Heart left ventricle (tissue), 16 donors: ENCODE measurements at regions of chr19 and their contacts with region 1.

Region 1: DNA sequence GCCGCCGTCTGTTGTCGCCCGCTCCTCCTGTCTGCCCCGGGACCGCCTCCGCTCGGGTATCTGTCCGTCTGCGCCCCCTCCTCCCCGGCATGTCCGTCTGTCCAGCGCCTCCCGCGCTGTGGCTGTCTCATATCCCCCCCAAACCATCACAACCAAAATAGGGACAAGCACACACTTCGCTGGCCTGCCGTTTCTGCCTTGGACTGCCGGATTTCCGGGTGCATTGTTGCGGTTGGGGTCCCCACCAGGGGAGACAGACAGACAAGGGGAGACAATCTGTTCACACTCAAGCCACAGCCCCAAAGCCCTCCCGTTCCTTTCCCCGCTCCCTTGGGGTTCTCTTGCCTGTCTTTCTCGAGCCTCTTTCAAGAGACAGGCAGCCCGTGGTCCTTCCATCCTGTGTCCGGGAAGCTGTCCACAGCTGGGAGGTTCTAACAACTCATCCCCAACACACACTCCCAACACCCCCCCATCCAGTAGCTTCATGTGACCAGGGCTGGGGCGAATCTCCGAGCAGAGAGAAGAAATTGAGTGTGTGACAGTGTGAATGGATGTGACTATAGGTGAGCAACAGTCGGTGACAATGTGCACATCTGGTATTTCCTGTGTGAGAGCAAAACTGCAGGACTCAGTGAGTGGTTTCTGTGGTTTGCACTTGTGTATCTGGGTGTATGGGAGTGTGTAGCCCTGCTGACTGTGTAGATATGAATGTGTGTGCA is 16.5 kb upstream of the FOSB start:
- DNase-seq: peak in 2 of 5 donors; percentile 31 to 38
- ATAC-seq: peak in 1 of 4 donors; percentile 10
- H3K4me3 ChIP-seq: peak overlapping the region; percentile 35 to 80 (median 63)
- H3K27ac ChIP-seq: peak overlapping the region; percentile 27 to 90 (median 74)
- H3K4me1 ChIP-seq: peaks cover 3 to 52% (median 27%) of the 10 kb centered on the region in 12 donors
- H3K27me3 ChIP-seq: no peaks in the 10 kb centered on the region
- CTCF ChIP-seq: no peak
- POLR2A ChIP-seq: no peak

Region 2: GRCh38 chr19:45171211-45171623 is 280.1 kb before region 1 on chr19:
- intact Hi-C with region 1: no loop called
- DNase-seq: no peak
- ATAC-seq: peak; percentile 28 to 77 (median 55)
- H3K4me3 ChIP-seq: no peak overlapping the region
- H3K27ac ChIP-seq: peak overlapping the region; percentile 16 to 83 (median 54)
- H3K4me1 ChIP-seq: peaks cover 0 to 42% (median 18%) of the 10 kb centered on the region in 12 donors
- H3K27me3 ChIP-seq: no peaks in the 10 kb centered on the region
- CTCF ChIP-seq: no peak
- POLR2A ChIP-seq: no peak

Region 3: GRCh38 chr19:45423589-45424190 is 27.6 kb before region 1 on chr19 and contains the start of gene ERCC1:
- intact Hi-C with region 1: no loop called
- DNase-seq: peak; percentile 94 to 97 (median 95)
- ATAC-seq: peak; percentile 76 to 89 (median 86)
- H3K4me3 ChIP-seq: peak within 1 kb of the TSS; percentile 38 to 83 (median 70)
- H3K27ac ChIP-seq: peak within 1 kb of the TSS; percentile 66 to 98 (median 92)
- H3K4me1 ChIP-seq: peaks cover 2 to 73% (median 32%) of the 10 kb centered on the region in 12 donors
- H3K27me3 ChIP-seq: peaks cover 0 to 4% (median 0%) of the 10 kb centered on the region in 9 donors
- CTCF ChIP-seq: no peak
- POLR2A ChIP-seq: peak in 1 of 2 donors; percentile 29
- total RNA-seq, gene ERCC1: 104 to 156 (median 121) TPM

Region 4: DNA sequence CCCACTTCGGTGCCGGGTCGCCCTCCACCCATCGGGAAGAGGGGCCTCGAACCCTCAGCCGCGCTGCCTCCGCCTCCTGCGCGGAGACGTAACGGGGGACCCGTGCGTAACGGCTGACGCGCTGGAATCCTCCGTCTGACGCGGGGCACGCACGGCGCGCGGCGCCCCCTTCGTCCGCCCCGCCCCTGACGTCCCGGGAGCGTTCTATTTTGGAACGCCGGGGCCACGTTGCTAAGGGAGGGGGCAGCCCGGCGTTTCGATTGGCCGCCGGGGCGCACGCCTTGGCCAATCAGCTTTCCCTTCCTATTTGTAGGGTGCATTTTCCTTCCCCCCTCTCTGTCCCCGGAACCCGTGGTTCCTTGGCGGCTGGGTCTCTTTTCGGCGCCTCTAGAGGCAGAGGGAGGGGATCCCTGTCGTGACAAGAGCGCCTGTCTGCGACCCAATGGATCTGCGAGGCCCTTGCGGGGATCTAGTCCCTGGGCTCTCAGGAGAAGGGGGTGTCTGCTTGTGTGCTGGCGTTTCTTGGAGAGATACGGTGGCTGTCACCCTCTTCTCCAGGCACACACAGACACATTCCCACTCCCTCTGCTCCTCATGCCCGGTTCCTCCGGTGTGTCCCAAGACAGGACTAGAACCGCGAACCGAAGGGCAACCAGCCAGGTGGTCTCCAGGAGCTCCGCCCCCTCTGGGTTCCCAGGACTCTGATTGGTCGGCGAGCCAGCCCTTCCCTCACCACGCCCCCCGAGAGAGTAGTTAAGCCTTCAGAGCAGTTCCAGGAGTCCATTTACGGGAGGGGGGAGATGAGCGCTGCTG is 18.0 kb after region 1 on chr19:
- intact Hi-C with region 1: loop called in 2 of 10 experiments (anchors 2 kb)
- DNase-seq: peak; percentile 94 to 97 (median 95)
- ATAC-seq: peak; percentile 89 to 92 (median 90)
- H3K4me3 ChIP-seq: peak overlapping the region; percentile 51 to 89 (median 72)
- H3K27ac ChIP-seq: peak overlapping the region; percentile 80 to 99 (median 95)
- H3K4me1 ChIP-seq: peaks cover 5 to 40% (median 26%) of the 10 kb centered on the region in 12 donors
- H3K27me3 ChIP-seq: peaks cover 0 to 15% (median 0%) of the 10 kb centered on the region in 9 donors
- CTCF ChIP-seq: peak in 3 of 12 donors; percentile 7 to 23 (median 15)
- POLR2A ChIP-seq: peak; percentile 50 to 97

Region 5: DNA sequence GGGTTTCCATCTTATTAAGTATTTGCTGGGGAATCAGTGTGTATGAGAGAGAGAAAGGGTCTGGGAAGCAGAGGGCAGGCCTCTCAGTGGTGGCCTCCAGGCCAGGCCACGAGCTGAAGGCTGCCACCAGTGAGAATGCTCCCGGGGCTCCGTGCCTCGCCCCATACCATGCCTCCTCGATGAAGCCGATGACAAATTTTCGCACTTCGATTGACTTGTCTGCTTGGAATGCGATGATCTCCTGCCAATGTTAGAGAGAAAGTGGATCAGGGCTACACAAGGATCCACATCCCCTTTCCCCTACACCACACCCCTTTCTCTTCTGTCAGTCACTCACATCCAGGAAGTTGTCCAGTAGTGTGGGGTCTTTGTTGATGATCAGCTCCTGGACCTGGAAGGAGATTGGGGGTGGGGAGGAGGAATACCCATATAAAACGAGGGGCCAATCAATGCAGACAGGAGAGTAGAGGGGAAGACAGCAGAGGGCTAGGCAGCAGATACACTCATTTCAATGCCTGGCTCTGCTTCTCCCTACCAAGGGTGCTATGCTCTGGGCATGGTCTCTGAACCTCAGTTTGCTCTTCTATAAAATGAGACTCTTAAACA is 401.0 kb after region 1 on chr19:
- intact Hi-C with region 1: no loop called
- DNase-seq: no peak
- ATAC-seq: no peak
- H3K4me3 ChIP-seq: no peak overlapping the region
- H3K27ac ChIP-seq: no peak overlapping the region
- H3K4me1 ChIP-seq: no peaks in the 10 kb centered on the region
- H3K27me3 ChIP-seq: no peaks in the 10 kb centered on the region
- CTCF ChIP-seq: no peak
- POLR2A ChIP-seq: no peak